Heart left ventricle (tissue), 16 donors: ENCODE measurements at regions of chr14 and their contacts with region 1.

Region 1: GRCh38 chr14:37874429-37875191 is 279.2 kb downstream of the TTC6 start:
- DNase-seq: peak; percentile 62 to 89 (median 71)
- ATAC-seq: peak; percentile 64 to 88 (median 86)
- H3K4me3 ChIP-seq: no peak overlapping the region
- H3K27ac ChIP-seq: no peak overlapping the region
- H3K4me1 ChIP-seq: peaks cover 0 to 9% (median 0%) of the 10 kb centered on the region in 12 donors
- H3K27me3 ChIP-seq: no peaks in the 10 kb centered on the region
- CTCF ChIP-seq: peak; percentile 68 to 89 (median 82)
- POLR2A ChIP-seq: no peak

Region 2: GRCh38 chr14:36866867-36867266 is 1007.7 kb before region 1 on chr14:
- intact Hi-C with region 1: no loop called
- DNase-seq: no peak
- ATAC-seq: no peak
- H3K4me3 ChIP-seq: no peak overlapping the region
- H3K27ac ChIP-seq: no peak overlapping the region
- H3K4me1 ChIP-seq: no peaks in the 10 kb centered on the region
- H3K27me3 ChIP-seq: no peaks in the 10 kb centered on the region
- CTCF ChIP-seq: no peak
- POLR2A ChIP-seq: no peak

Region 3: GRCh38 chr14:37142835-37143401 is 731.7 kb before region 1 on chr14:
- intact Hi-C with region 1: no loop called
- DNase-seq: no peak
- ATAC-seq: no peak
- H3K4me3 ChIP-seq: no peak overlapping the region
- H3K27ac ChIP-seq: no peak overlapping the region
- H3K4me1 ChIP-seq: no peaks in the 10 kb centered on the region
- H3K27me3 ChIP-seq: no peaks in the 10 kb centered on the region
- CTCF ChIP-seq: no peak
- POLR2A ChIP-seq: no peak

Region 4: DNA sequence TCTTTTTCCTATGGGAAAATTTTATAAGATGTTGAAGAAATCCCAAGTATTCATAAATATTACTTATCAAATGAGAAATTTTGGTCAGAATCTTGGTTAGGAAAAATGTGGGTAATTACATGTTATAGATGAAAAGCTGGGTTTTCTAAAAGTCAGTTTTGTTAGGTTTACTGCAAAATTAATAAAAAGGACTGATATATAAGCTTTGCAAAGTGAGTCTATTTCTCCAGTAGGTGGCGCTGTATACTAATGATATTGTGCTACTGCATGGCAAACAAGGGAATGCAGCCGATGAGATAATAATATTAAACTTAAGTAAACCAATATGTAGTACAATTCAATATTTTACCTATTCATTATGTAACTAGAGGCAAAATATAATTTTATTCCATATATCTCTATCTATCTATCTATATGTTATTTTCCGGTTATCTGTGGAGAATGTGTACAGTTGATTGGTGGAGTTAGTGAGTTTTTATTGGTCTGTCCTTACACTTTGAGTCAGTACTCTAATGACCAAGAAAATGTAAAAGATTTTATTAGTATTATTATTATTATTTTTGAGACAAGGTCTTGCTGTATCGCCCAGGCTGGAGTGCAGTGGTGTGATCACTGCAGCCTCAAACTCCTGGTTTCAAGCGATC is 643.9 kb before region 1 on chr14:
- intact Hi-C with region 1: loop called in 2 of 10 experiments (anchors 5 kb)
- DNase-seq: no peak
- ATAC-seq: no peak
- H3K4me3 ChIP-seq: no peak overlapping the region
- H3K27ac ChIP-seq: no peak overlapping the region
- H3K4me1 ChIP-seq: no peaks in the 10 kb centered on the region
- H3K27me3 ChIP-seq: no peaks in the 10 kb centered on the region
- CTCF ChIP-seq: peak; percentile 55 to 90 (median 78)
- POLR2A ChIP-seq: no peak

Region 5: DNA sequence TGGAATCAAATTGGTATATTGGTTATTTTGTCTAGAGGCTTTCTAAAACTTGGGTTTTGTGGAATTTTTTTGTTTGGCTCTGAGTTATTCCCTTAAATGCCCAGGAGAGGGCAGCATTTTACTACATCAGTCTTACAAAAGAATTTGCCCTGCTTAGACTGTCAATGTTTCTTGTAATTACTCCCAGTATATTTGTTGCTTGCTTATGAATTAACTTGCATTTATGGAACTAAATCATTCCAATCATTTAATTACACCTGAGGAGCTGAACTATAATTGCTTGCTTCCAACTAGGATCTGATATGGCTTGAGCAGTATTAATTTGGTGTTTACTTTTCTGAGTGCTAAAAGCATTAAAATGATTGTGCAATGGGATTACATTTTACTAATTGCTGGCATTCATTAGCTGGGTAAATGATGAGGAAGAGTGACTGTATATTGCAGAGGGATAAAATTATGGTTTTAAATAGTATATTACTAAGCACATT is 628.1 kb before region 1 on chr14:
- intact Hi-C with region 1: loop called in 9 of 10 experiments (anchors 2 to 5 kb)
- DNase-seq: no peak
- ATAC-seq: no peak
- H3K4me3 ChIP-seq: no peak overlapping the region
- H3K27ac ChIP-seq: no peak overlapping the region
- H3K4me1 ChIP-seq: no peaks in the 10 kb centered on the region
- H3K27me3 ChIP-seq: no peaks in the 10 kb centered on the region
- CTCF ChIP-seq: peak; percentile 61 to 86 (median 75)
- POLR2A ChIP-seq: no peak

Region 6: GRCh38 chr14:37709419-37710195 is 165.0 kb before region 1 on chr14:
- intact Hi-C with region 1: loop called in 9 of 10 experiments (anchors 1 to 10 kb)
- DNase-seq: no peak
- ATAC-seq: no peak
- H3K4me3 ChIP-seq: no peak overlapping the region
- H3K27ac ChIP-seq: no peak overlapping the region
- H3K4me1 ChIP-seq: no peaks in the 10 kb centered on the region
- H3K27me3 ChIP-seq: peaks cover 0 to 13% (median 0%) of the 10 kb centered on the region in 9 donors
- CTCF ChIP-seq: peak in 7 of 12 donors; percentile 24 to 46 (median 42)
- POLR2A ChIP-seq: no peak

Region 7: DNA sequence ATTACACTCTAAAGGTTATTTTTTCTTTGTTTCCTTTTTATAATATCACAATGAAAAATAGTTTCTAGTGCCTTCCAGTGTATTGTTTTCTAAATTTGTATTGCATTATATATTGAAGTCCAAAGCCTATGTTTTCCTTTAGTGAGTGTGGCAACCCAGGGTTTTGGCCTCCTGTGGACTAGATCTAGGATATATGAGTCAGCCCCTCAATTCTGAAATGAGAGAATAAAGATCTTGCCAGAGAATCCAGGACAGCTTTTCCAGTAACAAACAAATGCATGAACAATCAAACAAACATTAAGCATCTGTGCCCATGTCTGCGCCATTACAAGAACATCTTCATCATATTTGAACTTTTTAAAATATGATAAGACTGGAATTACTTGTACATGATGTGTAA is 262.4 kb after region 1 on chr14:
- intact Hi-C with region 1: no loop called
- DNase-seq: no peak
- ATAC-seq: no peak
- H3K4me3 ChIP-seq: no peak overlapping the region
- H3K27ac ChIP-seq: no peak overlapping the region
- H3K4me1 ChIP-seq: no peaks in the 10 kb centered on the region
- H3K27me3 ChIP-seq: no peaks in the 10 kb centered on the region
- CTCF ChIP-seq: no peak
- POLR2A ChIP-seq: no peak